Right cardiac atrium (tissue), 5 donors: ENCODE measurements at regions of chr16 and their contacts with region 1.

Region 1: GRCh38 chr16:58000706-58001676 is at the start of gene USB1:
- DNase-seq: peak; percentile 90 to 96 (median 95)
- ATAC-seq: peak; percentile 95
- H3K4me3 ChIP-seq: peak within 1 kb of the TSS; percentile 94
- H3K27ac ChIP-seq: peak within 1 kb of the TSS; percentile 88
- H3K4me1 ChIP-seq: no peaks in the 10 kb centered on the region
- H3K27me3 ChIP-seq: no peaks in the 10 kb centered on the region
- total RNA-seq, gene USB1: 24.5 to 35.3 (median 29.3) TPM

Region 2: DNA sequence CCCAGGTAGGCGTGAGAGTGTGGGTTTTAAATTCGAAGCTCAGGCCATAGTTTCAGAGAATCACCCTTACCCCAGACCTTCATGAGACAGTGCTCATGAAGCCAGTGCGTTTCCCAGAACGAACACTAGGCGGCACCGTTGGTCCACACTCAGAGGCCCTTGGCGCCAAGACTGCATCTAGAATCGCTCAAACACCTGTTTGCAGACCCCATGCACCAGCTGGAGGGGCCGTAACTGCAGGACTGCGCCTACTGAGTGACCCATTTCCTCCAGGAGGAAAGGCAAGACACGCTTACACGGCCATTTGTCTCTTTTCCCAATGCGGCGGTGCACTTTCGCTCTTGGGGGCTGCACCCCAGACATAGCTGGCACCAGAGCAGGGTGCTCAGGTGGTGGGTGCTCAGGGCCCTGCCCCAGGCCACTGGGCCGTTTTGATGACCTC is 424.5 kb before region 1 on chr16:
- intact Hi-C with region 1: loop called in 1 of 4 experiments (anchors 10 kb)
- DNase-seq: peak; percentile 69 to 91 (median 89)
- ATAC-seq: peak; percentile 34 to 74
- H3K4me3 ChIP-seq: no peak overlapping the region
- H3K27ac ChIP-seq: no peak overlapping the region
- H3K4me1 ChIP-seq: no peaks in the 10 kb centered on the region
- H3K27me3 ChIP-seq: no peaks in the 10 kb centered on the region

Region 3: DNA sequence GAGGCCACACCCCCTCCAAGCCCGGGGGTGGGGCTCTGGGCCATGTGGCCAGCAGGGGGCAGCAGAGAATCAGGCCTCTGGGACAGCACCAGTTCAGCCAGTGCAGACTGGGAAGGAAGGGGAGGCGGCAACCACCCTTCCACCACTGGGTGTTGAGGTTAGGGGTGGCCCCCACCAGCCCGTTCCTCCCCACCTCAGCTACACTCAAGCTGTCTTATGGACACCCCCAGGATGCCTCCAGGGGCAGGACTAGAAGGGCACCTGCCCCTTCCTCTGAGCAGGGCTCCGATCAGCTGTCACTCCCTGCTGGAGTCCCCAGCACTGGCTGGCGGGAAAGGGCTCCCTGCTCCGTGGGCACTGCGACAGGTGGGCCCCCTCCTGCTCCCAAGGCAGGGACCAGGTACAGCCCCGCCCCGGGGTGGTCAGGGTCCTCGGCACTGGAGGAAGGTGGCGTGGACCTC is 243.6 kb before region 1 on chr16:
- intact Hi-C with region 1: loop called in 2 of 4 experiments (anchors 10 kb)
- DNase-seq: peak; percentile 90 to 95 (median 95)
- ATAC-seq: peak; percentile 83 to 86
- H3K4me3 ChIP-seq: no peak overlapping the region
- H3K27ac ChIP-seq: no peak overlapping the region
- H3K4me1 ChIP-seq: no peaks in the 10 kb centered on the region
- H3K27me3 ChIP-seq: no peaks in the 10 kb centered on the region

Region 4: GRCh38 chr16:57899771-57900661 is 101.0 kb before region 1 on chr16:
- intact Hi-C with region 1: loop called (anchors 1 to 5 kb)
- DNase-seq: peak; percentile 75 to 91 (median 86)
- ATAC-seq: peak; percentile 65 to 75
- H3K4me3 ChIP-seq: no peak overlapping the region
- H3K27ac ChIP-seq: no peak overlapping the region
- H3K4me1 ChIP-seq: no peaks in the 10 kb centered on the region
- H3K27me3 ChIP-seq: no peaks in the 10 kb centered on the region

Region 5: DNA sequence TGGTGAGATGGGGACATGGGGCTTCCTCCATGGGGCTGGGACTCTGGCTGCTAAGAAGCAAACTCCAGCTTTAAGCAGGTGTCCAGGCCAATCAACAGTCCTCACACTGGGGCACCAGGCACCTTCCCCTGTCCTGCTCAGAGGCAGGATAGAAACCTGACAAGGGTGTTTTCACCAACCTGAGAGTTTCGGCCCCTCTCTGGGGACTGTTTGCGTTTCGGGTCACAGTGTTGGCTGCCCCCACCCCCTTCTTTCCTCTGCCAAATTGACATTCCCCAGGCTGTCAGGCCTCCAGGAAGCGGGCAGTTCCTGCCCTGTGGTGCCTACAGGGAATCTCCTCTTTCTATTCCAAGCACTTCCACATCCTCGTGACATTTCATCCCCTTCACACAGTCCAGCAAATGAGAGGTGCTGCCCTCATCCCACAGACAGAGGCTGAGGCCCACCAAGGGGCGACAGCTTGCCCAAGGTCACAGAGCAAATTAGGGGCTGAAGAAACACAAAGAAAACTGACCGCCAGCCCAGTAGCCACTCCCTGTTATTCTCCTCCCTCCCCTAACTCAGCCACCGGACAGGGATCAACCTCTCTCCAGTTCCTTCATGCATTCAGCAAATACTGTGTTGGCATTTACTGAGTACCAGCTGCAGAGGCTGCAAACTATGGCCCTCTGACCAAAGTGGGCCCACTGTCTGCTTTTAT is 62.5 kb after region 1 on chr16:
- intact Hi-C with region 1: no loop called
- DNase-seq: no peak
- ATAC-seq: peak; percentile 67 to 75
- H3K4me3 ChIP-seq: no peak overlapping the region
- H3K27ac ChIP-seq: no peak overlapping the region
- H3K4me1 ChIP-seq: no peaks in the 10 kb centered on the region
- H3K27me3 ChIP-seq: no peaks in the 10 kb centered on the region